ENCODE measurements at regions of chr9 and their contacts with region 1.

Region 1: GRCh38 chr9:133184962-133185361 is 21.2 kb upstream of the GBGT1 start:
- DNase-seq: peak; percentile 50 to 77 (median 69)
- H3K4me3 ChIP-seq: no peak overlapping the region
- H3K27ac ChIP-seq: no peak overlapping the region
- H3K4me1 ChIP-seq: no peaks in the 10 kb centered on the region
- H3K27me3 ChIP-seq: no peaks in the 10 kb centered on the region
- CTCF ChIP-seq: peak; percentile 51 to 76 (median 72)
- POLR2A ChIP-seq: no peak

Region 2: DNA sequence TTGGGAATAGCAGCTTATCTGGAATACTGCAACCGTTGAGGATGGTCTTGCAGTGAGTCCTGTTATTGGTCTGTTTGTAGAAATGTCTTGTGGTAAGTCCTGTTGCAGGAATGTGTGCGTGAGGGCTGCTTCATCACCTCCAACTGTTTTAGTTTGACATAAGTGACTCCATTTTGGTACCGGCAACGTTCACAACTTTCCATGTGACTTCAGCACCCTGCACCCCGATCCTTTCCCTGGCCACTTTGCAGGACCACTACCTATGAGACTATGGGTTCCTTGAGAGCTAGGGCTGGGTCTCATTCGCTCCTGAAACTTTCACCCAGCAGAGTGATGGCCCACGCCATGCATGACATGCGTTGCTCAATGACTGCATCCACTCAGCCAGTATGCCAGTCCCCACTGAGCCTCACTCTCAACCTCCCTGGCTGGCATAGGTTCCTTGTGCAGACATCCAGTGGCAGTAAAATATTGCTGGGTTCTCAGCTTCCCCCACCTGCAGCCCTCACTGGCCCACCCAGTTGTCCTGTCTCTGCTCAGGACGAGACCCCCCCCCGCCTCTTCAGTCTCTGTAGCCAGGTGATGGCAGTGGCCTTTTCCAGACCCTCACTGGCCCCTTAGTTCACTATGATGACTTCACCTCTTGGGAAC is 143.0 kb after region 1 on chr9:
- intact Hi-C with region 1: loop called (anchors 5 kb)
- DNase-seq: peak in 3 of 7 donors; percentile 5 to 13 (median 12)
- H3K4me3 ChIP-seq: no peak overlapping the region
- H3K27ac ChIP-seq: no peak overlapping the region
- H3K4me1 ChIP-seq: no peaks in the 10 kb centered on the region
- H3K27me3 ChIP-seq: no peaks in the 10 kb centered on the region
- CTCF ChIP-seq: no peak
- POLR2A ChIP-seq: no peak

Region 3: DNA sequence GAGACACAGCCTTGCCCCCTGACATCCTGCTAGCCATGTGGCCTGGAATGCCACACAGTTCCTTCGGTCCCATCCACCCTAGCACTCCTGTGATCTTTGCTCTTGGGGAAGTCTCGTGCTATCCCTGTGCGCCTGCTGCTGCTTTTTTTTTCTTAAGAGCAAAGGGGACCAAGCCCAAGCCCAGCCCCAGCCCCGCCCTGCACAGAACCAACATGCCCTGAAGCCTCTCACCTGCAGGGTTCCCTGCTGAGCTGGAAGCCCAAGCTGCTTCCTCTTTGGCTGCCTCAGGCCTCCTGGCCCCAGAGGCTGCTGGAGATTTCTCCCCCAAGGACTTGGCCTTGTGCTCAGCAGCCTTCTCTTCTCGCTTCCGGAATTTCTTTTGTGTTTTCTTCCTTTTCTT is 149.2 kb after region 1 on chr9:
- intact Hi-C with region 1: loop called (anchors 5 kb)
- DNase-seq: peak in 5 of 7 donors; percentile 15 to 46 (median 21)
- H3K4me3 ChIP-seq: no peak overlapping the region
- H3K27ac ChIP-seq: peak overlapping the region in 1 of 5 donors; percentile 12
- H3K4me1 ChIP-seq: peaks cover 23 to 25% of the 10 kb centered on the region in 2 donors
- H3K27me3 ChIP-seq: no peaks in the 10 kb centered on the region
- CTCF ChIP-seq: no peak
- POLR2A ChIP-seq: no peak

Region 4: DNA sequence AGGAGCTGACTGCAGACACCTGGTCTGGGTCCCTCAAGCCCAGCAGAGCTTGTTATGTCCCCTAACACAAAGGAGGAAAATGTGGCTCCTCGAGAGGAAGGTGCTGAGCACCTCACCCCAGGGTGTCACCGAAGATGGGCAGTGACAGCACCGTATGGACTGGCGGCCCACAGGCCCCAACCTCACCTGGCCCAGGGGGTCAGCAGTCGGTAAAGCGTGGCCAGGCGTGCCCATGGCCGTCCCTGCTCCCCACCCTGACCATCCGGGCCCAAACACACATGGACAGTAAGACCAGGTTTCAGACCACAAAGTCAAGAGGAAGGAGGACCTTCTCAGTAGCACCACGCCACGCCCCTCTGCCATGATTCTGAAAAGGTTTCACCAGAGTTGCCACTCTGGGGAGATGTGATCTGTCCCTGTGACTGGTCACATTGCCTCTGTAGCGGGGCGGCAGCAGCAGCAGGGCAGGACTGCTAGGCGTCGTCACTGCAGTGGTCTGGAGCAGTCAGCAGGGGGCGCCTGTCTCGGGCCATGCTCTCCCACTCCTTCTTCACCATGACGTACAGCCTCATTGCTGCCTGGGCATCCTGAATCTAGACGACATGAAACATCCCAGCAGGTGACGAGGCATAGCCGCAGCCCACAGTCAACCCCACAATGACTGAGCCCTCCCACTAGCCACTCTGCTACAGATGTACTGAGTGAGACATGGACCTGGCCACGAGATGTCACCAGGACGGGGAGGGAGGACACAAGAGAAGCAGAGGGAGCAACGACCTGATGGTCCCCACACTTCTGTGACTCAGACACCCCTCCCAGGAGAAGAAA is 221.7 kb after region 1 on chr9:
- intact Hi-C with region 1: loop called in 1 of 2 experiments (anchors 10 kb)
- DNase-seq: peak; percentile 69 to 90 (median 79)
- H3K4me3 ChIP-seq: no peak overlapping the region
- H3K27ac ChIP-seq: peak overlapping the region in 3 of 5 donors; percentile 44 to 74 (median 70)
- H3K4me1 ChIP-seq: peaks cover 10 to 29% of the 10 kb centered on the region in 2 donors
- H3K27me3 ChIP-seq: no peaks in the 10 kb centered on the region
- CTCF ChIP-seq: peak; percentile 67 to 90 (median 80)
- POLR2A ChIP-seq: no peak

Region 5: GRCh38 chr9:133485361-133486260 is 300.6 kb after region 1 on chr9:
- intact Hi-C with region 1: loop called (anchors 5 to 10 kb)
- DNase-seq: no peak
- H3K4me3 ChIP-seq: no peak overlapping the region
- H3K27ac ChIP-seq: no peak overlapping the region
- H3K4me1 ChIP-seq: peaks cover 0 to 4% of the 10 kb centered on the region in 2 donors
- H3K27me3 ChIP-seq: no peaks in the 10 kb centered on the region
- CTCF ChIP-seq: no peak
- POLR2A ChIP-seq: no peak

Measured in adrenal gland (tissue), 19 donors.